Left ventricle myocardium superior (tissue), 1 donor: ENCODE measurements at regions of chr11 and their contacts with region 1.

Region 1: GRCh38 chr11:61899146-61899841 is 7.9 kb upstream of the FADS3 start:
- DNase-seq: peak; percentile 91
- ATAC-seq: peak; percentile 83

Region 2: GRCh38 chr11:61947486-61948210 is 48.4 kb after region 1 on chr11:
- intact Hi-C with region 1: loop called (anchors 5 kb)
- DNase-seq: peak; percentile 89
- ATAC-seq: peak; percentile 79

Region 3: GRCh38 chr11:62108017-62108750 is 208.9 kb after region 1 on chr11:
- intact Hi-C with region 1: loop called (anchors 10 kb)
- DNase-seq: no peak
- ATAC-seq: peak; percentile 32